PC-9 (cell line): ENCODE measurements at regions of chrX and their contacts with region 1.

Region 1: GRCh38 chrX:19030805-19031204 is 46.9 kb upstream of the PHKA2 start:
- DNase-seq: no peak
- H3K4me3 ChIP-seq: no peak overlapping the region
- H3K27ac ChIP-seq: no peak overlapping the region
- H3K4me1 ChIP-seq: no peaks in the 10 kb centered on the region
- H3K27me3 ChIP-seq: no peaks in the 10 kb centered on the region
- CTCF ChIP-seq: no peak

Region 2: GRCh38 chrX:18951032-18951431 is 79.8 kb before region 1 on chrX:
- CTCF ChIA-PET with region 1: no interaction called
- POLR2A ChIA-PET with region 1: no interaction called
- intact Hi-C with region 1: no loop called
- DNase-seq: no peak
- H3K4me3 ChIP-seq: no peak overlapping the region
- H3K27ac ChIP-seq: no peak overlapping the region
- H3K4me1 ChIP-seq: no peaks in the 10 kb centered on the region
- H3K27me3 ChIP-seq: no peaks in the 10 kb centered on the region
- CTCF ChIP-seq: no peak

Region 3: GRCh38 chrX:19156186-19156585 is 125.4 kb after region 1 on chrX:
- CTCF ChIA-PET with region 1: no interaction called
- POLR2A ChIA-PET with region 1: no interaction called
- intact Hi-C with region 1: no loop called
- DNase-seq: no peak
- H3K4me3 ChIP-seq: no peak overlapping the region
- H3K27ac ChIP-seq: no peak overlapping the region
- H3K4me1 ChIP-seq: no peaks in the 10 kb centered on the region
- H3K27me3 ChIP-seq: no peaks in the 10 kb centered on the region
- CTCF ChIP-seq: no peak

Region 4: GRCh38 chrX:19272452-19272851 is 241.6 kb after region 1 on chrX:
- CTCF ChIA-PET with region 1: interaction called, 11 read pairs
- POLR2A ChIA-PET with region 1: no interaction called
- intact Hi-C with region 1: no loop called
- DNase-seq: no peak
- H3K4me3 ChIP-seq: no peak overlapping the region
- H3K27ac ChIP-seq: no peak overlapping the region
- H3K4me1 ChIP-seq: no peaks in the 10 kb centered on the region
- H3K27me3 ChIP-seq: 0 out of 2 replicates have a peak, but pooled peaks cover 3% of the 10 kb centered on the region
- CTCF ChIP-seq: no peak

Region 5: DNA sequence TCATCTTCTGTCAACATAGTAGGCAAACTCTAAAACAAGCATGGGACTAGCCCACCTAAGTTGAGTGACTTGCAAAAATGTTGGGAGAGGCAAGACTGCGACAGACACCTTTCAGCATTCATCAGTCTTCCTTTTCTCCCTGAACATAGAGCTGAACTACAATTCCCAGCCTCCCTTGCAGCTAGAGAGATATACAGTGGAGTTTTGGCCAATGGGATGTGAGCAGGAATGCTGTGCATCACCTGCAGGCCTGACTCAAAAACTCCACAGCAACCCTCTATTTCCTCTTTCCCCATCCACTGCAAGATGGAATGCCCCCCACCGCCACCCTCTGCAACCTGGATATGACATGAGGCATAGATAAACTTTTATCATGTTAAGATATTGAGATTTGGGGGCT is 379.5 kb after region 1 on chrX:
- CTCF ChIA-PET with region 1: no interaction called
- POLR2A ChIA-PET with region 1: no interaction called
- intact Hi-C with region 1: no loop called
- DNase-seq: no peak
- H3K4me3 ChIP-seq: no peak overlapping the region
- H3K27ac ChIP-seq: no peak overlapping the region
- H3K4me1 ChIP-seq: no peaks in the 10 kb centered on the region
- H3K27me3 ChIP-seq: peaks cover 6% of the 10 kb centered on the region; the same call in 1 of the 2 replicates
- CTCF ChIP-seq: no peak